ENCODE measurements at regions of chr10 and their contacts with region 1.

Region 1: DNA sequence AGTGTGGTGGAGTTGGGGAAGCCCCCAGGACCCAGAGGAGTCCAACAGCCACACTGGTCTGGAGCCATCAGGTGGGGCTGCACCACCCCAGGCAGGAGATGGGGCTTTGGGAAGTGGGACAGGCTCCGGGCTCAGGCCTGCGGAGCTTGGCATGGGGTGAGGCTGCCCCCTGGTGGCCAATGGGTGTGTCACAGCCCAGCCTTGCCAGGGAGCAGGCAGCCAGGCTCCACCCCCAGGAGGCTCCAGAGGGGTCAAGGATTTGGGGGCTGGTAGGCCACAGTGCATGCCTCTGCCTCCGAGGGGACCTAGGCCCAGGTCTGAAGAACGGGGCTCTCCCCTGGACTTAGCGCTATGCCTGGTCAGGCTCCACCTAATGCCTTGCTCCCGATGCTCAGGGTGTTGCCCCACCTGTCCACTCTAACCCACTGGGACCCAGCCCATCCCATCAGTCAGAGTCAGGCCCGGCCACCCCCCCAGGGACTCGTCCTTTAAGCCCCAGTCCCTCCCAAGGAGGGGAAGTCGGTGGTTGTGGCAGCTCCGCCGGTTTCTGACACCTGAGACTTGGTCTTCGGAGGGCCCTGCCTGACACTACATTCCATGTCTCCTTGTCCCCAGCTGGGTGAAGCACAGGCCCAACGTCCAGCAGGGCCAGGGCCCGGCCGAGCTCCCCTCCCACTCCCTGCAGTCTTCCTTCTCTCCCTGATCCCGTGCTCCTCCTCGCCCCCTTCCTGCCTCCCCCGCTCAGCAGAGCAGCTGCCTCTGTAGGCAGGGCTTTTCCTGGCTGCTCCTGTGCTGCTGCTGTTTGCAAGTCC is 11.3 kb upstream of the SAMD8 start:
- DNase-seq: peak; percentile 90
- ATAC-seq: peak; percentile 95
- H3K4me3 ChIP-seq: no peak overlapping the region
- H3K27ac ChIP-seq: no peak overlapping the region
- H3K4me1 ChIP-seq: peaks cover 6% of the 10 kb centered on the region
- H3K27me3 ChIP-seq: no peaks in the 10 kb centered on the region
- CTCF ChIP-seq: peak; percentile 100

Region 2: GRCh38 chr10:74262856-74263255 is 837.3 kb before region 1 on chr10:
- intact Hi-C with region 1: loop called (anchors 5 kb)
- DNase-seq: no peak
- ATAC-seq: no peak
- H3K4me3 ChIP-seq: no peak overlapping the region
- H3K27ac ChIP-seq: no peak overlapping the region
- H3K4me1 ChIP-seq: no peaks in the 10 kb centered on the region
- H3K27me3 ChIP-seq: no peaks in the 10 kb centered on the region
- CTCF ChIP-seq: no peak